CD4-positive, alpha-beta memory T cell (primary cell): ENCODE measurements at regions of chr11 and their contacts with region 1.

Region 1: GRCh38 chr11:78188286-78189173 is at the starts of genes KCTD21 and USP35:
- DNase-seq: peak; percentile 85 to 92 (median 87)
- H3K4me3 ChIP-seq: peak within 1 kb of the TSS; percentile 88 to 90
- H3K4me3 Mint-ChIP-seq: peak within 1 kb of the TSS; percentile 98 to 99 (median 99)
- H3K27ac ChIP-seq: peak within 1 kb of the TSS; percentile 85
- H3K27ac Mint-ChIP-seq: peak within 1 kb of the TSS; percentile 95 to 99 (median 98)
- H3K4me1 ChIP-seq: peaks cover 39% of the 10 kb centered on the region
- H3K4me1 Mint-ChIP-seq: peaks cover 33 to 63% (median 47%) of the 10 kb centered on the region in 4 donors
- H3K27me3 ChIP-seq: no peaks in the 10 kb centered on the region
- H3K27me3 Mint-ChIP-seq: no peaks in the 10 kb centered on the region
- total RNA-seq, gene KCTD21: 8.0 to 8.6 TPM
- total RNA-seq, gene USP35: 12.4 to 14.3 TPM

Region 2: GRCh38 chr11:78079232-78080083 is 109.1 kb before region 1 on chr11 and contains the start of gene NDUFC2:
- CTCF ChIA-PET with region 1: no interaction called
- POLR2A ChIA-PET with region 1: interaction called, 11 read pairs
- intact Hi-C with region 1: loop called (anchors 5 kb)
- DNase-seq: peak; percentile 60 to 66 (median 64)
- H3K4me3 ChIP-seq: peak within 1 kb of the TSS; percentile 77 to 98
- H3K4me3 Mint-ChIP-seq: peak within 1 kb of the TSS; percentile 93 to 98 (median 96)
- H3K27ac ChIP-seq: peak within 1 kb of the TSS; percentile 75
- H3K27ac Mint-ChIP-seq: peak within 1 kb of the TSS; percentile 87 to 98 (median 96)
- H3K4me1 ChIP-seq: peaks cover 55% of the 10 kb centered on the region
- H3K4me1 Mint-ChIP-seq: peaks cover 34 to 72% (median 49%) of the 10 kb centered on the region in 4 donors
- H3K27me3 ChIP-seq: no peaks in the 10 kb centered on the region
- H3K27me3 Mint-ChIP-seq: no peaks in the 10 kb centered on the region
- total RNA-seq, gene NDUFC2: 80.5 to 86.5 TPM

Region 3: DNA sequence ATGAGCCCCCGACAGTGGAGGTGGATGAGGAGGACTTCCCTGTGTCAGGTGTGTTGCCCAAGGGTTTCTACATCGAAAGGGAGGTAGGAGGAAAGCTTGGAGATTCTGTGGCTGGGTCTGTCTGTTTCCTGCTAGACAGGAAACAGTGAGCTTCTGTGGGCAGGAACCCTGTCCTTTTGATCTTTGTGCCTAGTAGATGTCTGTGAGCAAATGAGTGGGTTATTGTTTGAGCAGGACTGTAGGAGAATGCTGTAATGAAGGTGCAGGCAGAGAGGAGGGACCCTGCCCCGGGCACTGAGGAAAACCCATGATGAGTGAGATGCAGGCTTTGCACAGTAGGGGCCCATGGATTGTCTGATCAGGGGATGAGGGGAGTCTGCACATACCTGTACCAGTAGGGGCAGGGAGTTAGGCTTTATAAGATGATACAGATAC is 14.2 kb after region 1 on chr11:
- CTCF ChIA-PET with region 1: interaction called, 6 read pairs
- POLR2A ChIA-PET with region 1: interaction called, 53 read pairs
- intact Hi-C with region 1: loop called (anchors 1 kb)
- DNase-seq: peak; percentile 76 to 94 (median 79)
- H3K4me3 ChIP-seq: peak overlapping the region; percentile 41 to 54
- H3K4me3 Mint-ChIP-seq: peak overlapping the region; percentile 81 to 94 (median 86)
- H3K27ac ChIP-seq: peak overlapping the region; percentile 73
- H3K27ac Mint-ChIP-seq: peak overlapping the region; percentile 91 to 99 (median 97)
- H3K4me1 ChIP-seq: peaks cover 39% of the 10 kb centered on the region
- H3K4me1 Mint-ChIP-seq: peaks cover 31 to 54% (median 33%) of the 10 kb centered on the region in 4 donors
- H3K27me3 ChIP-seq: no peaks in the 10 kb centered on the region
- H3K27me3 Mint-ChIP-seq: no peaks in the 10 kb centered on the region

Region 4: DNA sequence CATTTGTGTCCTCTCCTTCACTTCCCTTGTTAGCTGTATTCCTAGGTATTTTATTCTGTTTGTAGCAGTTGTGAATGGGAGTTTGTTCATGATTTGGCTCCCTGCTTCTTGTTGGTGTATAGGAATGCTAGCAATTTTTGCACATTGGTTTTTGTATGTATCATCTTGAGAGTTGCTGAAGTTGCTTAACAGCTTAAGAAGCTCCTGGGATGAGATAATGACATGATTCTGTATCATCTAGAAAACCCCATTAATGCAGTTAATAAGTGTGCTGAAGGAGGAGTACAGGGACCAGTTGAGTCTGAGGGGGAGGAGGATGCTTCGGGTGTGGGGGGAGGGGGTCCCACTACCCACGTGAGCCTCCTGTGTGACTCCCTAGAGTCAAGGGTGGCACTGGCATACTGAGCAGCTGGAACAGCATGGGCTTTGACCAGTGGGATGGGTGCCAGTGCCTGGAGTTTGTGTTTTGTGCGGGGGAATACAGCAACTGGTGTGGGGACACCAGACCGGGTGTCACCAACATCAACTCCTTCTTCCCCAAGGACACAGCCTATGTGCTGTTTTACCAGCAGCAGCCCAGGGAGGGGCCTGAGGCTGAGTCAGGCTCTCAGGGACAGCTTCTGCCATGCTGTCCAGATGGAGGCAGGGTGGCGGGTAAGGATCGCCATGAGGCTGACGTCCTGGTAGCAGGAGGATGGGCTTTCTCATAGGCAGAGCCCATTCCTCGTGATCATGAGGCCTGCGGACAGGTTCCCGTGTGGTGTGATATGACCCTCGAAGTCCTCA is 24.2 kb after region 1 on chr11:
- CTCF ChIA-PET with region 1: no interaction called
- POLR2A ChIA-PET with region 1: no interaction called
- intact Hi-C with region 1: no loop called
- DNase-seq: no peak
- H3K4me3 ChIP-seq: no peak overlapping the region
- H3K4me3 Mint-ChIP-seq: no peak overlapping the region
- H3K27ac ChIP-seq: no peak overlapping the region
- H3K27ac Mint-ChIP-seq: peak overlapping the region in 1 of 7 donors; percentile 22
- H3K4me1 ChIP-seq: no peaks in the 10 kb centered on the region
- H3K4me1 Mint-ChIP-seq: peaks cover 0 to 11% (median 4%) of the 10 kb centered on the region in 4 donors
- H3K27me3 ChIP-seq: no peaks in the 10 kb centered on the region
- H3K27me3 Mint-ChIP-seq: no peaks in the 10 kb centered on the region